Dorsolateral prefrontal cortex (tissue), 120 donors: ENCODE measurements at regions of chr6 and their contacts with region 1.

Region 1: DNA sequence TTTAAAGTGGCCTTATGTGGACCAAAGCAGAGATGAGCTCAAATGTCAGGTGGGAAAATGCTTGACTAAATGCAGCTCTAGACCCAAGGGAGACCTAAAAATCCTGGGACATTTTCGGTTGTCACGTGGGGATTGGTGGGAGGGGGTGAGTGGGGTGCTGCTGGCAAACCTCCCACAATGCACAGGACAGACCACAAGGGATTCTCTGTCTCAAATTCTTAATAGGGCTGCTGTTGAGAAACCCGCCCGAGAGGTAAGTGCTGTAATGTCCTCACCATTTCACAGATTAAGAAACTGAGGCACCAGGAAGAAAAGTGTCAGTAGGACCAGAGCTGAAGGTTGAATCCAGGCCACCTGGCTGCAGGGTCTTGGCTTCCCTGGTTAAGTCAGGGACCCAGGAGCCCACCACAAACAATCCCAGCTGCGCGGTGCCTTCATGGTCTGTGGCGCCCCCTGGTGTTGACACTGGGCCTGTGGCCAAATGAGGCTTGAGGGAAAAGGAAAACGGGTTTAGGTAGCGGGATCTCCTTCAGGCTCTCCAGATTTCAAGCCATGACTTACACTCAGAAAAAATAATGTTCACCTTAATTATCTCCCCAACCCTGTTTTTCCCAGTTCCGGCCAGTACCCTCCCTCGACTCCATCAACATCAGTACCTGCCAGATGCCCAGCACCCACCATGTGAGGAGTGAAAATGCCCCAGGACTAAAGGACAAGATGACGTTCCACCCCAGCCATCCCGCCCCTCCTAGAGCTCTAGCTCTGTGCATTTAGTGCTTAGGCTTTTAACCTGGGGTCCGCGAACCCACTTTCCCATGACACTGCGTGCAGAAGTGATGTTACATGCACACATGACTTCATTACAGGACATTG is 7.2 kb downstream of the HLA-G start:
- DNase-seq: peak in 2 of 10 donors; percentile 36 to 48
- H3K4me3 ChIP-seq: peak overlapping the region in 1 of 59 donors; percentile 12
- H3K27ac ChIP-seq: no peak overlapping the region
- H3K27me3 ChIP-seq: peaks cover 0 to 72% (median 20%) of the 10 kb centered on the region in 45 donors
- CTCF ChIP-seq: peak; percentile 52 to 94 (median 84)

Region 2: DNA sequence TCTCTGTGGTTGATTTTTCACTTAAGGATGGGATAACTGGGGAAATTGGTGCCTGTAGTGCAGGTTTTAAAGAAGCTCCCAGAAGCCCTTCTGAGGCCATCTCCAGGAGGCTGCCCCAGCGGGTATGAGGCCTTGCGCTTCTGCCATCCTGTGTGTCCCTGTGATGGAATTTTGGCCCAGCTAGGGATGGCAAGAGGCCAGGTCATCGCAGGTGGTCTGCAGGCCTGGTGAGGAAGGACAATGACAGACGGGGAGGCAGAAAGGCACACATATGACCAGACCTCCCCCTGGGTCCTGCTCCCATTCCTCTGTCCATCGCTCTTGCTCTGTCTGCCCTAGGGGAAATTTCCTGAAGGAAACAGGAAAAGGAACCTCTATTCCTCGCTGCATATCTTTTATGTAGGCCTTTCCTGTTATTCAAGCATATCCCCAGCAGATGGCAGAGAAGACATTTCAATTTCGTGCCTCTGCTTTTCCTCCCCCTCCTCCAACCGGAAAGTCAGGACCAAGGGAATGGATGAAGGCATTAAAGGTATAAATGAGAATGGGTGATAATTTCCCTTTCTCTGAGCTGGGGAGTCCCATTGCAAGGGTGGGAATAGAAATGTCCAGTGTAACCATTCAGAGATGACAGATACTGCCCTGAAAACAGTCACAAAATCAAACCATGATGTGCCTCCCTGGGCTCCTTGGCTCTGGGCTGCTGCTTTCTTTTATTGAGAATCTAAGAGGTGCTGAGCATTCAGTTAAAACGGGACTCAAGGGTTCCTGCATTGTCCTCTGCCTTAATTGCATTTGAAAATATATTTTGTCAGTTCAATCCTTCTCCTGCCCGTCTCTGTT is 129.2 kb before region 1 on chr6:
- intact Hi-C with region 1: loop called (anchors 2 to 5 kb)
- DNase-seq: peak in 2 of 10 donors; percentile 37 to 45
- H3K4me3 ChIP-seq: no peak overlapping the region
- H3K27ac ChIP-seq: no peak overlapping the region
- H3K27me3 ChIP-seq: peaks cover 0 to 37% (median 5%) of the 10 kb centered on the region in 45 donors
- CTCF ChIP-seq: peak in 55 of 56 donors; percentile 29 to 86 (median 71)

Region 3: DNA sequence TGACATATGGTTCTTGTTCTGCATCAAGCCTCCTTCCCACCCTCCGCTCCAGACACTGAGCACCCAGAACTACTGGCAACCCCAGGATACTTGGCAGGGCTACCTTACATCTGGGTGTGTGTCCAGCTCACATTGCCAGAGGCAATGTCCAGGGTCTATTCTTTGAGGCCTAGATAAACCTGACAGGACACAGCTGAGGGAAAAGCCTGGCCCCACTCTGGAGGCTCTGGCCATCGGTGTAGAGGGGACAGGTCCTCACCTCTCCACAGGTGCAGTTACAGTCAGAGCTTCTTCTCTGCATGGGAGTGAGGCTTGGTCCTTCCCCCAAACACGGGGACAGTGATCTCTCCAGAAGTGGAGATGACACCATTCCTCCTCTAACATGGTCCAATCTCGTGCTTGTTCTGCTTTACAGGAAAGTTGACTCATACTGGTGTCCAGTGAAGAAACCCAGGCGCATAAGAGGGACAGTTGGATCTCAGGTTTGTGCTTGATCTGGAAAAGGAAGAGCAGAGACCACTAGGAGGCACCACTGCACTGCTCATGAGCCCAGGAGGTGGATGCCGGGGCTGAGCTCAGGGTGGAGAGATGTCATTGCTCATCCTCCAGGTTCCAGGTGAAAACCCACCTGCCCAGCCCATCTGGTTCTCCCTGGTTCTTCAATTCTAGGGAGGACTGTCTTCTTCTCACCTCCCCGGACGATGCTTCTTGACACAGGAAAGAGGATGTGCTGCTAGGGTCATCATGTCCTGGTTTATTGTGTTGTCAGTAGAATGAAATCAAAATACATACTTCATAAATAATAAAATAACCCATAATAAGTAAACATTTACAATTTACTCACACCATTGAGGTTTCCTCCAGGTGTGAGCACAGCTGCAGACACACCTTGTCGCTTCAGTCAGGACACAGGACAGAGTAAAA is 96.8 kb before region 1 on chr6:
- intact Hi-C with region 1: loop called (anchors 1 to 10 kb)
- DNase-seq: peak in 5 of 10 donors; percentile 24 to 71 (median 52)
- H3K4me3 ChIP-seq: no peak overlapping the region
- H3K27ac ChIP-seq: no peak overlapping the region
- H3K27me3 ChIP-seq: peaks cover 0 to 4% (median 0%) of the 10 kb centered on the region in 45 donors
- CTCF ChIP-seq: peak in 55 of 56 donors; percentile 29 to 82 (median 66)

Region 4: GRCh38 chr6:29797135-29797534 is 37.7 kb before region 1 on chr6:
- intact Hi-C with region 1: no loop called
- DNase-seq: no peak
- H3K4me3 ChIP-seq: no peak overlapping the region
- H3K27ac ChIP-seq: no peak overlapping the region
- H3K27me3 ChIP-seq: peaks cover 0 to 26% (median 0%) of the 10 kb centered on the region in 45 donors
- CTCF ChIP-seq: no peak

Region 5: GRCh38 chr6:30154709-30155519 is 320.1 kb after region 1 on chr6:
- intact Hi-C with region 1: no loop called
- DNase-seq: no peak
- H3K4me3 ChIP-seq: no peak overlapping the region
- H3K27ac ChIP-seq: no peak overlapping the region
- H3K27me3 ChIP-seq: peaks cover 0 to 35% (median 6%) of the 10 kb centered on the region in 45 donors
- CTCF ChIP-seq: no peak